Activated T-helper 2 cell treated with anti-CD3 and anti-CD28 coated beads, Interferon-gamma antibody, Interleukin-2, Interleukin-4, amounts not matched to agents 10 μg/mL and 5 μg/mL and 100 μg/mL, durations not matched to agents 14 hours and 24 hours and 36 hours (primary cell): ENCODE measurements at regions of chr2 and their contacts with region 1.

Region 1: DNA sequence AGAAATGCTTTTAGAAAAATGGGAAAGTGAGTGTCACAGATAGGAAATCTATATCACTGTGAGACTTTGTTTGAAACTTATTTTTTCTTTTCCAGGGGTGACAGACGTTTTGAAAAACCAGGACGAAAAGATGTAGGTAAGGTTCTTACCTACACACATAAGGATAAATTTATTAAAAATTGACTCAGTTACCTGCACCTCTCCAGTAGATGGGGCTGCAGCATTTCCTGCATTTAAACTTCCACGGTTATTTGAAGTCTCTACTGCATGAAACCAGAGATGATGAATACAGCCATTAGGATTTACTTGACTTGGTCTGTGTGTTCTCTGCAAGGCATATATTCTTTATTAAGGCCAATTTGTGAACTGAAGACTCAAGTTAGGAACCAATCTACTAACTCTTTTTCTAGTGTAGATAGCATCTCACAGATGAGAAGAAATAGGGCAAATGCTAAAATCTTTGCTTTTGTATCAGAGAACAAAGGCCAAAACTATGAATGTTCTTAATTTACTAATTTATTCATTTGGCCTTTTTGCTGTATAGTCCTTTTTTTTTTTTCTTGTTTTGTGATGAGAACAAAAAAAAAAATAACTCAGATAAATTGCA is 15.0 kb downstream of the KCNJ13 start:
- DNase-seq: peak; percentile 25
- H3K4me3 Mint-ChIP-seq: no peak overlapping the region
- H3K27ac Mint-ChIP-seq: no peak overlapping the region
- H3K4me1 Mint-ChIP-seq: peaks cover 21% of the 10 kb centered on the region
- H3K27me3 Mint-ChIP-seq: no peaks in the 10 kb centered on the region

Region 2: GRCh38 chr2:232415751-232416527 is 345.5 kb before region 1 on chr2:
- intact Hi-C with region 1: no loop called
- DNase-seq: no peak
- H3K4me3 Mint-ChIP-seq: no peak overlapping the region
- H3K27ac Mint-ChIP-seq: no peak overlapping the region
- H3K4me1 Mint-ChIP-seq: peaks cover 18% of the 10 kb centered on the region
- H3K27me3 Mint-ChIP-seq: peaks cover 54% of the 10 kb centered on the region

Region 3: GRCh38 chr2:232600053-232600773 is 161.2 kb before region 1 on chr2:
- intact Hi-C with region 1: no loop called
- DNase-seq: no peak
- H3K4me3 Mint-ChIP-seq: no peak overlapping the region
- H3K27ac Mint-ChIP-seq: no peak overlapping the region
- H3K4me1 Mint-ChIP-seq: no peaks in the 10 kb centered on the region
- H3K27me3 Mint-ChIP-seq: peaks cover 17% of the 10 kb centered on the region

Region 4: GRCh38 chr2:232854082-232854481 is 92.7 kb after region 1 on chr2:
- intact Hi-C with region 1: loop called (anchors 5 kb)
- DNase-seq: no peak
- H3K4me3 Mint-ChIP-seq: no peak overlapping the region
- H3K27ac Mint-ChIP-seq: no peak overlapping the region
- H3K4me1 Mint-ChIP-seq: peaks cover 2% of the 10 kb centered on the region
- H3K27me3 Mint-ChIP-seq: no peaks in the 10 kb centered on the region